ENCODE measurements at regions of chr2 and their contacts with region 1.

Region 1: GRCh38 chr2:45794134-45794617 is 142.7 kb downstream of the PRKCE start:
- DNase-seq: no peak
- CTCF ChIP-seq: no peak

Region 2: DNA sequence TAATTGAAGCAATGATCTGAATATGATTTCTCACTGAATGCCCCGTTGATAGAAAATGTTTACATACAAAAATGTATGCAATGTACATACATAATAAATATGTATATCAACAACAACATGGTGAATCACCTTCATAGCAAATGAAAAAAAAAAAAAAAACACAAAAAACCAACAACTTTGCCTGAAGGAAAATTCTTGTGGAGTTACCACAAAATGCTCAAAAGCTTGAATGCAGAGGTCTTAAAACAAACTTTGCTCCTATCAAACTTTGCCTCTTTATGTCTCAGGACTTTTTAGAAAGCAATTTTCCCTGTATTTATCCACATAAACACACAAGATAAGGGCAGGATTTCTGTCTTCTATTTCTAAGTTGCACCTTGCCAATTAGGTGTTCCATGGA is 692.0 kb before region 1 on chr2:
- CTCF ChIA-PET with region 1: no interaction called
- POLR2A ChIA-PET with region 1: no interaction called
- DNase-seq: no peak
- CTCF ChIP-seq: no peak

Region 3: GRCh38 chr2:45169339-45170190 is 624.6 kb before region 1 on chr2:
- CTCF ChIA-PET with region 1: no interaction called
- POLR2A ChIA-PET with region 1: no interaction called
- DNase-seq: peak; percentile 27
- CTCF ChIP-seq: no peak

Region 4: DNA sequence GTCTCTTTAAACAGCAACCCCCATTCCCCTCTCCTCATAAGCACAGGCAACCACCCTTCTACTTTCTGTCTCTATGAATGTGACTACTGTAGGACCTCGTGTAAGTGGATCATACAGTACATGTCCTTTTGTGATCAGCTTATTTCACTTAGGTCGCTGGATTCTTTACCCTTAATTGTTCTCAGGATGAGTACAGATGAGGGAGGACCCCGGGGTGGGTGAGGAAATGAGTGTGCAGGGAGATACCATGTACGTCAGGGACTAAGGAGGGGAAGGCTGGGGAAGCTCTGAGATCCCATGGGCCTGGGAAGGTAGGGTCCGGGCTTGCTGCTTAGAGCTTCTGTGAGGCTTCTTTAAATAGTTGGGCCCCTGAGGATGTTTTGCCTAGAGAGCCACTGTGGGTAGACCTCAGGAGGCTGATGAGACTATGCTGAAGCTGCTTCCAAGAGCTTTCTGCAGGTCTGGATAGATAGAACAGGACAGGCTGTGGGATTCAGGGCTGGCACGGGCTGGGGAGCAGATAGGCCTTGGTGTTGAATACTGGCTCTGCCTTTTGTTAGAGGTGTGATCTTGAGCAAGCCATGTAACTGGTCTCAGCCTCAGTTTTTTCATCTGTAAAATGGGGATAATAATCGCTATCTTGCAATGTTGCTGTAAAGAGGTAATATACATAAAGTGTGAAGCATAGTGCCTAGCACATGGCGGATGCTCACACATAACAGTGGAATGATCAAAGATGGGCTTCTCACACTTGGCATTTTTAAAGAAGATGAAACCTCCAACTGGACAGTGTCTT is 12.6 kb after region 1 on chr2:
- CTCF ChIA-PET with region 1: interaction called, 16 read pairs
- POLR2A ChIA-PET with region 1: interaction called, 6 read pairs
- DNase-seq: peak; percentile 35
- CTCF ChIP-seq: no peak